Caki2 (cell line): ENCODE measurements at regions of chr11 and their contacts with region 1.

Region 1: GRCh38 chr11:27319072-27319471 is 43.9 kb downstream of the CCDC34 start:
- DNase-seq: peak; percentile 86

Region 2: GRCh38 chr11:27209562-27210005 is 109.5 kb before region 1 on chr11:
- in situ Hi-C with region 1: no loop called
- DNase-seq: peak; percentile 96

Region 3: GRCh38 chr11:27281740-27282590 is 37.1 kb before region 1 on chr11:
- in situ Hi-C with region 1: loop called (anchors 5 kb)
- DNase-seq: peak; percentile 99

Region 4: GRCh38 chr11:27524155-27524554 is 205.1 kb after region 1 on chr11:
- in situ Hi-C with region 1: no loop called
- DNase-seq: peak; percentile 36